Activated CD4-positive, alpha-beta memory T cell treated with anti-CD3 and anti-CD28 coated beads, Interleukin-2, amount 10 ng/mL, durations not matched to agents 7 days and 5 days (primary cell): ENCODE measurements at regions of chr9 and their contacts with region 1.

Region 1: GRCh38 chr9:105244003-105244733 is at the start of gene SLC44A1:
- DNase-seq: peak; percentile 95
- H3K4me3 Mint-ChIP-seq: peak within 1 kb of the TSS; percentile 80
- H3K27ac Mint-ChIP-seq: peak within 1 kb of the TSS; percentile 63
- H3K4me1 Mint-ChIP-seq: peaks cover 18% of the 10 kb centered on the region
- H3K27me3 Mint-ChIP-seq: peaks cover 63% of the 10 kb centered on the region
- total RNA-seq, gene SLC44A1: 9.5 to 10.2 TPM

Region 2: DNA sequence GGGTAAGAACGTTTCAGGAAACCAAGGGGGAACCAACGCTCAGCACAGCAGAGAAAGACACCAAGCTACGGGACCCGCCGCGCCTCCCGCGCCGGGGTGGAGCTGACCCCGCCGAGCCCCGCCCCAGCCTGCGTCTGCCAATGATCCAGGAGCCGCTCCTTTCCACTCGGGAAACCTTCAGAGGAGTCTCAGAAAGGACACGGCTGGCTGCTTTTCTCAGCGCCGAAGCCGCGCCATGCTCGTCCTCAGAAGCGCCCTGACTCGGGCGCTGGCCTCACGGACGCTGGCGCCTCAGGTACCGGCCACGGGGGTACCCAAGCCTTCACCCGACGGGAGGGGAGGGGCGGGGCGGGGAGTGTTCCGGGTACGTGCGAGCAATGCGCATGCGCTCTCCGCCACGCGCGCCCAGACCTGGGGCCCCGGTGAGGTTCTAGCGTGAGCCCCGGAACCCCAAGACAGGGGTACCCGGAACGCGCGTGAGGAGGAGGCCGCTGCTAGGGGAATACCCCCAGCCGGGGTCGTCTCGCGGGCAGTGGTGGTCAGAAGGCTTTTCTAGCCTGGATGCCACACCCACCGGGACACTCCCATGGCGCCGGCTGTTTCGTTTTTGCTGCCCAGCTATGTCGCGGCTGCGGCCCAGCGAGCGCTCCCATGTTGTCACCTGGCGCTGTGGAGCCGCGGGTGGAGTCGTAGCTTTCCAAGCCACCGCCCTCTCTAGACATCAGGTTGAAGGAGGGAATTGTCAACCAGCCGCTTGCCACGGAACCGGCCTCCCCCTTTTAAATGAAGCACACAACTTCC is 496.4 kb before region 1 on chr9 and contains the start of gene NIPSNAP3A:
- CTCF ChIA-PET with region 1: interaction called, 4 read pairs
- POLR2A ChIA-PET with region 1: interaction called, 12 read pairs
- DNase-seq: peak; percentile 88
- H3K4me3 Mint-ChIP-seq: peak within 1 kb of the TSS; percentile 98
- H3K27ac Mint-ChIP-seq: peak within 1 kb of the TSS; percentile 98
- H3K4me1 Mint-ChIP-seq: peaks cover 28% of the 10 kb centered on the region
- H3K27me3 Mint-ChIP-seq: peaks cover 2% of the 10 kb centered on the region
- total RNA-seq, gene NIPSNAP3A: 14.0 to 17.1 TPM

Region 3: GRCh38 chr9:105269593-105269992 is 25.4 kb after region 1 on chr9:
- CTCF ChIA-PET with region 1: no interaction called
- POLR2A ChIA-PET with region 1: no interaction called
- DNase-seq: no peak
- H3K4me3 Mint-ChIP-seq: no peak overlapping the region
- H3K27ac Mint-ChIP-seq: no peak overlapping the region
- H3K4me1 Mint-ChIP-seq: peaks cover 5% of the 10 kb centered on the region
- H3K27me3 Mint-ChIP-seq: no peaks in the 10 kb centered on the region

Region 4: DNA sequence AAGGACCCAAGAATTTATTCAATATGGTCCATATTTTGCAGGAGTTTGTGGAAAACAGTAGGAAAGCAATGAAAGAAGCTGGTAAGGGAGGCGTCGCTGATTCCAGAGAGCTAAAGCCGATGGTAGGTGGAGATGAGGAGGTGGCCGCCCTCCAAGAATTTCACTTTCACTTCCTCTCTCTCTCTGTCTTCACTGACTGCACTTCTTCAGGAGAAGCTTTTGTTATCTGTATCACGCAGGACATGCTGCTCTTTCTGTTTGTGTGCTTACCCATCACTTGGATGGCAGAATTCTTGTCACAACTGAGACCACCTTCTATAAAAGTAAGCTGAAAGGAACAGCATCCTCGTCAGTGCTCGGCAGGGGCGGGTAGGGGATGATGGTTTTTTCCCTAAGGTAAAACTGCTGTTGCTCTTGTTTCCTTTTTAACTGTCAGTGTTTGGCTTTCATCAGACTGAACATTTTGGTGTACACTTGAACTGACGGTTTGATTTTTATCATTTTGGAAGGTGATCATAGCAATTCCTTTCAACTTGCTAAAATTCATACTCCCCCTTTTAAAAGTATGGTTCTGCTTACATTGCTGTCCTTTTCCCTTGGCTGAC is 141.3 kb after region 1 on chr9:
- CTCF ChIA-PET with region 1: no interaction called
- POLR2A ChIA-PET with region 1: no interaction called
- DNase-seq: peak; percentile 40
- H3K4me3 Mint-ChIP-seq: peak overlapping the region; percentile 76
- H3K27ac Mint-ChIP-seq: no peak overlapping the region
- H3K4me1 Mint-ChIP-seq: peaks cover 13% of the 10 kb centered on the region
- H3K27me3 Mint-ChIP-seq: peaks cover 9% of the 10 kb centered on the region

Region 5: DNA sequence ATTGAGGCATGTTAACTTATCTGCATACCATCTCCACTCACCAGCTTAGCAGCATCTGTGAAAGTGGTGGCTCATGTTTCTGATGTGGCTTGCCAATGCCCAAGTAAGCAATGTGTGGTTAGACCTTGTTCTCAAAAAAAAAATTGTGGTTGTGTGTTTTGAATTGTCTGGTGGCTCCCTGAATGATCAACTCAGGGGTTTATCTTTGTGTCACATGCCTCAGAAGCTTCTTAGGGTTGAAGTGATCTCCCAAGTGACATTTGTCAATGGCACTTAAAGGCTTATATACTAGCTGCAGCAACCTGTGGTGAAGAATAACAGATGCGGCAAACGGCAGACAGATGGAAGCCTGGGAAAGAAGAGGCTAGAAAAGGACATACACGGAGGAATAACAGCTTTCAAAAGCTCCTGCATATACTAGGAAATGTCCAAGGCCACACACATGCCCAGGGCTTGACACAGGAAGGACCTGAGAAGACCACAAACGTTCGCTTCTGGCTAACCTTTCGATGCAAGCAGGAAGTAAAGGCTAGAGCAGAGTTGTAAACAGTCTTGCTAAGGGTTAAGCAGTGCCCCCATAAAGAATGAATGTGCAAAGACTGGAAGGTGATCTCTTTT is 161.5 kb after region 1 on chr9:
- CTCF ChIA-PET with region 1: interaction called, 6 read pairs
- POLR2A ChIA-PET with region 1: interaction called, 16 read pairs
- DNase-seq: peak; percentile 76
- H3K4me3 Mint-ChIP-seq: peak overlapping the region; percentile 49
- H3K27ac Mint-ChIP-seq: peak overlapping the region; percentile 73
- H3K4me1 Mint-ChIP-seq: peaks cover 31% of the 10 kb centered on the region
- H3K27me3 Mint-ChIP-seq: peaks cover 76% of the 10 kb centered on the region